Activated CD8-positive, alpha-beta memory T cell treated with anti-CD3 and anti-CD28 coated beads, Interleukin-2, amount 10 ng/mL, durations not matched to agents 7 days and 5 days (primary cell): ENCODE measurements at regions of chr10 and their contacts with region 1.

Region 1: DNA sequence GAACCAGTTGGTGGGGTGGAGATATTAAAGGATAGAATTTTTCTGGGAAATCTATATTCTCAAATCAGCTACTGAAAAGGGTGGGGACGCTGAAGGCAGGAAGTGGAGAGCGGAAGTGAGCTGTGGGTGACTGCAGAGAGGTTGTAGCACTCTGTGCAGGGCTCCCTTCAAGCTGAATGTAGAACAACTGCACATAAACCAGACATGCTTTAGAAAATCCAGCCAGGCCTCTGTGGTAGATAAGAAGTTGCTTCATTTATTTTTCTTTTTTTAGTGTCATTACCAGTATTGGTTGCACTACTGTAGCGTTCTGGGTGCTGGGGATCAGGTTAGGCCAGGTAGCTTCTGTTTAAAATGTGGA is 127.8 kb downstream of the CELF2 start:
- DNase-seq: peak; percentile 89
- ATAC-seq: peak; percentile 74
- H3K4me3 Mint-ChIP-seq: peak overlapping the region; percentile 54
- H3K27ac Mint-ChIP-seq: peak overlapping the region; percentile 97
- H3K4me1 Mint-ChIP-seq: peaks cover 92% of the 10 kb centered on the region
- H3K27me3 Mint-ChIP-seq: no peaks in the 10 kb centered on the region

Region 2: GRCh38 chr10:11159543-11160215 is 14.2 kb after region 1 on chr10:
- CTCF ChIA-PET with region 1: interaction called, 189 read pairs
- DNase-seq: peak; percentile 15
- ATAC-seq: no peak
- H3K4me3 Mint-ChIP-seq: no peak overlapping the region
- H3K27ac Mint-ChIP-seq: no peak overlapping the region
- H3K4me1 Mint-ChIP-seq: peaks cover 61% of the 10 kb centered on the region
- H3K27me3 Mint-ChIP-seq: no peaks in the 10 kb centered on the region

Region 3: GRCh38 chr10:11178606-11179515 is 33.4 kb after region 1 on chr10:
- CTCF ChIA-PET with region 1: interaction called, 84 read pairs
- DNase-seq: peak; percentile 97
- ATAC-seq: peak; percentile 74
- H3K4me3 Mint-ChIP-seq: no peak overlapping the region
- H3K27ac Mint-ChIP-seq: no peak overlapping the region
- H3K4me1 Mint-ChIP-seq: peaks cover 91% of the 10 kb centered on the region
- H3K27me3 Mint-ChIP-seq: no peaks in the 10 kb centered on the region